Heart left ventricle (tissue), 16 donors: ENCODE measurements at regions of chr1 and their contacts with region 1.

Region 1: DNA sequence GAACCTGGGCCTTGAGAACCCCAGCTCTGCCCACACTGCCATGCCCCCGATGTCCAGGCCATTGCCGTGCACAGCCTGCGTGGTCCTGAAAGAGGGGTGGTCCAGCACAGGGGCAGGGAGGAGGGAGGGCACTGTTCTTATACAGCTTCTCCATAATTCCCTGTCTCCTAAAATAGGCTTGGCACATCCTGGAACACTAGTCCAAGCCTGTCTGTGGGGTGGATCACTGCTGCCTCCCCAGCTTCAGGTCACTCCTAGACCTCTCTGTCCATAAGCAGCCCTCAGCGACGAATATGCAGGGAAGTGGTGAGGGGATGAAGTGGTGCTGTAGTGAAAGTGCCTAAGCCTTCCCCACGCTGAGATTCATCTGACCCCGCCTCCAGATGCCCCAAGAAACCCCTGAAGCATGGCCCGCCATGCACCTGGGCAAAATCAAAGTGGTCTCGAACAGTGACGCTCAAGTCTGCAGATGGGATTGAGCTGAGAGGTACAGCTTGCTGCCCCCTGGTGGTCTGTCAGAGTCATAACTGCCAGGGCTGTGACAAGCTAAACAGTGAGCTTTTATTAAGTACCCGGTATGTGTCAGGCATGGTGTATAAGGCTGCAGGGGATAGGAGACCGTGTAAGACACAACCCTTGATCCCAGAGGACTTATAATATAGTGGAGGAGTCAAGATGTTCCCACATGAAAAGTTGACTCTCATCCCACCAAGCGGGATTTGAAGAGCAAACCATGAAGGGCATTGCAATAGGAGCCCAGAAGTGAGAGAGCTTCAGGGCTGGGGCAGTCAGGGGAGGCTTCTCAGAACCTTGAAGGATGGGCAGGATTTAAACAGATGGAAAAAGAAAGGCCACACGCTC is 66.6 kb downstream of the FAM163A start:
- DNase-seq: peak in 4 of 5 donors; percentile 58 to 63 (median 61)
- ATAC-seq: peak in 3 of 4 donors; percentile 56 to 70 (median 69)
- H3K4me3 ChIP-seq: no peak overlapping the region
- H3K27ac ChIP-seq: no peak overlapping the region
- H3K4me1 ChIP-seq: peaks cover 0 to 14% (median 7%) of the 10 kb centered on the region in 12 donors
- H3K27me3 ChIP-seq: peaks cover 0 to 29% (median 0%) of the 10 kb centered on the region in 9 donors
- CTCF ChIP-seq: peak; percentile 80 to 93 (median 91)
- POLR2A ChIP-seq: no peak

Region 2: GRCh38 chr1:179322557-179322956 is 487.2 kb before region 1 on chr1:
- intact Hi-C with region 1: no loop called
- DNase-seq: no peak
- ATAC-seq: peak in 1 of 4 donors; percentile 60
- H3K4me3 ChIP-seq: peak overlapping the region in 4 of 12 donors; percentile 4 to 34 (median 24)
- H3K27ac ChIP-seq: peak overlapping the region in 1 of 12 donors; percentile 44
- H3K4me1 ChIP-seq: peaks cover 0 to 30% (median 0%) of the 10 kb centered on the region in 12 donors
- H3K27me3 ChIP-seq: no peaks in the 10 kb centered on the region
- CTCF ChIP-seq: no peak
- POLR2A ChIP-seq: no peak

Region 3: DNA sequence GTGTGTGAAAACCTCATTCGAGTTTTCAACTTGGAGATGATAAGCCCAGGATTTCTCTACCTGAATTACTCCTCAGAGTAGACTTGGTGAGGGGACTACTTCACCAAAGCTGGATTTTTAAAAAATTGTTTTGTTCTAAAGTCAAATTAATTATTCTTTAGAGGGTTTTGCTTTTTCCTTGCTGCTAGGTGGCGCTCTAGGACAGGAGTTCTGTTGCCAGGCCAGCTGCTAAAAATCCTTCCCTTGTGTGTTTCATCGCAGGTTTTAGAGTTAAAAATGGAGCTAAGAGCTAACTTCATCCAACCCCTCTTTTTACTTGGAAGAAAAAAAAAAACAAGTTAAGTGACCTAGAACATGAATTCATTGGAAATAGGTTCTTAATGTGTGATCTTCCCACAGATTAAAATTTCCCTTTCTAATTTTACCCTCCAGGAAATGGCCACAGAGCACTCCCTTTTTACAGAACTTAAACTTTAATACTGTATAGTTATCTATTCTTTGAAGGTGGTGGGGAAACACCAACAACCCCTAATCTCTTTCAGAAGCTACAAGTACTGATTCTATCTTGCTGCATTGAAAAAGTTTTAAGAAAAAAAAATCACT is 103.3 kb before region 1 on chr1:
- intact Hi-C with region 1: loop called (anchors 1 to 2 kb)
- DNase-seq: peak in 4 of 5 donors; percentile 37 to 63 (median 50)
- ATAC-seq: no peak
- H3K4me3 ChIP-seq: no peak overlapping the region
- H3K27ac ChIP-seq: no peak overlapping the region
- H3K4me1 ChIP-seq: peaks cover 0 to 30% (median 18%) of the 10 kb centered on the region in 12 donors
- H3K27me3 ChIP-seq: peaks cover 0 to 4% (median 0%) of the 10 kb centered on the region in 9 donors
- CTCF ChIP-seq: peak; percentile 47 to 90 (median 78)
- POLR2A ChIP-seq: no peak

Region 4: DNA sequence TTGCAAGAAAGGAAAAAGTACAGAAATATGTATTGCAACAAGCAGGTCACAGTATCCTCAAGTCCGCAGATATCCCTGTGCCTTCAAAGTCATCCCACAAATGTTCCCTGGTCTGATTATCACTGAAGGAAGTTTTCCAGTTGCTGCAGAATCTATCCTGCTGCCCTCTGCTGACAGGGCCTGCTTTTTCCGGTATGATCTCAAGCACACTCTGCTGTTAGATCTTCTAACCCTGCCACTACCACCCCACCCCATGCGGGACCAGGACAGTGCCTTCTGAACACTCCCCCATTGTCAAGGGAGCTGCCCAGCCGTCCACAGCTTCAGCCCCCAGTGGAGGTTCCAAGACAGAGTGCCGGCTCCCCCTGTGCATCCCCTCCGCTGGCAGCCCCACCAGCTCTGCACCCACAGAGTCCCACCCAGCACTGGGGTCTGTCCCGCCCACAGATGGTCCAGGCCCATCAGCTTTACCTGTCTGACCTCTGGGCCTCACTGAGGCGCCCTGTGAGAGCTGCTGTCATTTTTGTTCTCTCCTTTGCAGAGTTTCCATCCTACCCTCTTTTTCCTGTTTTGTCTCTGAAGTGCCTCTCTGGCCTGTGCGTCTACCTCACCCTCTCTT is 38.7 kb before region 1 on chr1:
- intact Hi-C with region 1: no loop called
- DNase-seq: no peak
- ATAC-seq: no peak
- H3K4me3 ChIP-seq: no peak overlapping the region
- H3K27ac ChIP-seq: no peak overlapping the region
- H3K4me1 ChIP-seq: no peaks in the 10 kb centered on the region
- H3K27me3 ChIP-seq: no peaks in the 10 kb centered on the region
- CTCF ChIP-seq: peak in 1 of 12 donors; percentile 10
- POLR2A ChIP-seq: no peak